ENCODE measurements at regions of chr5 and their contacts with region 1.

Region 1: GRCh38 chr5:36641431-36641830 is 35.0 kb downstream of the SLC1A3 start:
- DNase-seq: no peak
- H3K4me3 ChIP-seq: no peak overlapping the region
- H3K27ac ChIP-seq: no peak overlapping the region
- H3K4me1 ChIP-seq: peaks cover 0 to 4% (median 0%) of the 10 kb centered on the region in 4 experiments; a peak in 1 of 7 replicates
- H3K27me3 ChIP-seq: no peaks in the 10 kb centered on the region
- CTCF ChIP-seq: no peak
- EP300 ChIP-seq: no peak
- POLR2A ChIP-seq: no peak
- RAD21 ChIP-seq: no peak

Region 2: GRCh38 chr5:36651761-36652685 is 10.6 kb after region 1 on chr5:
- CTCF ChIA-PET with region 1: interaction called, 11 read pairs
- POLR2A ChIA-PET with region 1: no interaction called
- DNase-seq: no peak
- H3K4me3 ChIP-seq: no peak overlapping the region
- H3K27ac ChIP-seq: no peak overlapping the region
- H3K4me1 ChIP-seq: peaks cover 0 to 14% (median 10%) of the 10 kb centered on the region in 4 experiments; a peak in 6 of 7 replicates
- H3K27me3 ChIP-seq: no peaks in the 10 kb centered on the region
- CTCF ChIP-seq: no peak
- EP300 ChIP-seq: no peak
- POLR2A ChIP-seq: no peak
- RAD21 ChIP-seq: no peak